Activated T-helper 1 cell treated with anti-CD3 and anti-CD28 coated beads, Interleukin-12 subunit alpha, Interleukin-12 subunit beta, Interleukin-2, Interleukin-4 antibody, amounts not matched to agents 30 ng/mL and 10 ng/mL and 1 ng/mL, durations not matched to agents 14 hours and 24 hours and 36 hours (primary cell): ENCODE measurements at regions of chr18 and their contacts with region 1.

Region 1: GRCh38 chr18:46333431-46334135 is 229.4 kb downstream of the HAUS1 start:
- DNase-seq: peak; percentile 34
- H3K4me3 Mint-ChIP-seq: peak overlapping the region; percentile 76
- H3K27ac Mint-ChIP-seq: peak overlapping the region; percentile 2
- H3K4me1 Mint-ChIP-seq: peaks cover 39% of the 10 kb centered on the region
- H3K27me3 Mint-ChIP-seq: peaks cover 56% of the 10 kb centered on the region

Region 2: GRCh38 chr18:45670281-45670962 is 663.2 kb before region 1 on chr18:
- intact Hi-C with region 1: loop called (anchors 10 kb)
- DNase-seq: no peak
- H3K4me3 Mint-ChIP-seq: peak overlapping the region; percentile 46
- H3K27ac Mint-ChIP-seq: peak overlapping the region; percentile 50
- H3K4me1 Mint-ChIP-seq: peaks cover 61% of the 10 kb centered on the region
- H3K27me3 Mint-ChIP-seq: peaks cover 32% of the 10 kb centered on the region

Region 3: DNA sequence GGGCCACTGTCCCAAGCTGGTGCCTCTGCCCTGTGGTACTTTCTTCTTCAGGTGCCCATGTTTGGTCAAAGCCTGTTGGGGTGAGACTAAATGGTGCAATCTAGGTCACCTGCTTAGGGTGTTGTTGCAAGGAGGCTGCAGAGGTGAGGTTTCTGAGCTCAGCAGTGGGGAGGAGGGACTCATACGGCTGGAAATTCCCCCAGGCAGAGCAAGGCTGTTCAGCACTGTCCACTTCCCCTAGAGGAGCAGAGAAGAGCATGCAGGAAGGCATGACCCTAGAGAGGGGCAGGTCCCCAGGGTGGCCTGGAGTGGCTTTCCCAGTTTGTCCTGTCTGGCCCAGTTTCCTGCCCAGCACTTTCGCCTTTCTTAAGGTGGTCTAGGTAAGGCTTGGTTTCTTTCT is 18.4 kb before region 1 on chr18:
- intact Hi-C with region 1: no loop called
- DNase-seq: no peak
- H3K4me3 Mint-ChIP-seq: no peak overlapping the region
- H3K27ac Mint-ChIP-seq: no peak overlapping the region
- H3K4me1 Mint-ChIP-seq: peaks cover 12% of the 10 kb centered on the region
- H3K27me3 Mint-ChIP-seq: peaks cover 17% of the 10 kb centered on the region

Region 4: GRCh38 chr18:46343931-46344372 is 10.4 kb after region 1 on chr18:
- intact Hi-C with region 1: loop called (anchors 1 kb)
- DNase-seq: peak; percentile 55
- H3K4me3 Mint-ChIP-seq: peak overlapping the region; percentile 41
- H3K27ac Mint-ChIP-seq: peak overlapping the region; percentile 81
- H3K4me1 Mint-ChIP-seq: peaks cover 83% of the 10 kb centered on the region
- H3K27me3 Mint-ChIP-seq: no peaks in the 10 kb centered on the region

Region 5: DNA sequence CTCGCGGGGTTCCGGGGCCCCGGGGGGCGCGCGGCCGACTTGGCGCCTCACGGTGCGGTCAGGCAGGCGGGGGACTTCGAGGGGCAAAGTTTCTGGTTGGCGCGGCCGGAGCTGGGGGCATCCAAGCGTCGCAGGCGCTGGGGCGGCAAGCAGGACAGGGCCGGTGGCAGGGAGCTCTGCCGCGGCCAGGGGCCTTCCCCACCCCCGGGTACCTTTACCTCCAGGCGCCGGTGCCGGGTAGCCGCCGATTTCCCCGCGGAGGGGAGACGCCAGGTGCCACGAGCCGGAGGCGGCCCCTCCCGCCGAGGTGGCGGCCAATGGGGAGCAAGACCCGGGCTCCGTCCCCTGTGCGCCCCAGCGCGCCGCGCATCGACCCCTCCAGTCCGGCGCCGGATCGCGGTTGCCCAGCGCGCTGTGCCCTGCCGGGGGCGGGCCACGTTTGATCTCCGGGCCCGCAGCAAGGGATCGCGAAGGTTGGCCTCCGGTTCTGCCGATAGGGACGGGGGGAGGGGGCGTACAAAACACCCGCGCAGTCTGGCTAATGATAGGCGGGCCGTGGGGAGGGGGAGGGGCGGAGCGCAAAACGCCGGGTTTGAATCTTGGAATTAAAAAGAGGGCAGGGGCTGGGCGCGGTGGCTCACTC is 423.1 kb after region 1 on chr18 and contains the start of gene ST8SIA5:
- intact Hi-C with region 1: loop called (anchors 5 kb)
- DNase-seq: no peak
- H3K4me3 Mint-ChIP-seq: peak within 1 kb of the TSS; percentile 68
- H3K27ac Mint-ChIP-seq: no peak within 1 kb of the TSS
- H3K4me1 Mint-ChIP-seq: peaks cover 24% of the 10 kb centered on the region
- H3K27me3 Mint-ChIP-seq: peaks cover 49% of the 10 kb centered on the region
- total RNA-seq, gene ST8SIA5: not detected in 2 replicates